Mammary epithelial cell (primary cell): ENCODE measurements at regions of chr2 and their contacts with region 1.

Region 1: DNA sequence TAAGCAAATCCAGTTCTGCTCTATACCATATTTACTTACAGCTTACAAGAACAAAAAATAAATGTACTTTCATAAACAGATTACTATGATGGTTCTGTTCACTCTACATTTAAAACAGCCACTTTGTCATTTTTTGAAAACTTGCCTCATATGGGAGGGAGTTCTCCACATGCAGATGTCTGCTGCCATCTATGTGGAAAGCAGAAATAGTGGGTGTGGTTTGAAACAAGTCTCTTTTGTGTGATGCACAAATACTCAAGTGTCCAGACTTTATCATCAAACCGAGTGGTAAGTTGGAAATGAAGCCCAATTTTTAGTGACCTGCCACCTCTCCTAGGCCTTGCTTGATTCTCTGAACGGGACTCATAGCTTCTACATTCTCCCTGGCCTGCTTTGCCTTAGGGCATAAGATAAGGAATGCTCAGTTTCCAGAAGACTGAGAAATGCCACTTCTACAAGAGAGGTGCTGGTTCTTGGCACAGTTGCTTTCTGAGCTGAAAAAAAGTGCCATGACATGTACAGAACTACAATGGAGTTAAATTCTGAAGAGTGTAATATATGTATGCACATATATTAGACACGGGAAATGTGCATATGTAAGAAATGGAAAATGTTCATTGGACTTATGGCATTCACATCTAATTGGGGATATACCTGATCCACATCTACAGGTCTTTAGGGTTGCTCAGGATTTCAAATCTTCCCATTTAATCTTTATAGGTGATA is 221.0 kb downstream of the SLC8A1 start:
- DNase-seq: peak; percentile 12
- H3K4me3 ChIP-seq: no peak overlapping the region
- H3K27ac ChIP-seq: no peak overlapping the region
- H3K4me1 ChIP-seq: no peaks in the 10 kb centered on the region
- H3K27me3 ChIP-seq: no peaks in the 10 kb centered on the region
- CTCF ChIP-seq: peak in 1 of 2 donors; percentile 34

Region 2: GRCh38 chr2:39989888-39990287 is 241.0 kb before region 1 on chr2:
- CTCF ChIA-PET with region 1: no interaction called
- dilution Hi-C with region 1: no loop called
- in situ Hi-C with region 1: no loop called
- intact Hi-C with region 1: loop called (anchors 2 kb)
- DNase-seq: no peak
- H3K4me3 ChIP-seq: no peak overlapping the region
- H3K27ac ChIP-seq: no peak overlapping the region
- H3K4me1 ChIP-seq: peaks cover 8% of the 10 kb centered on the region
- H3K27me3 ChIP-seq: no peaks in the 10 kb centered on the region
- CTCF ChIP-seq: no peak

Region 3: DNA sequence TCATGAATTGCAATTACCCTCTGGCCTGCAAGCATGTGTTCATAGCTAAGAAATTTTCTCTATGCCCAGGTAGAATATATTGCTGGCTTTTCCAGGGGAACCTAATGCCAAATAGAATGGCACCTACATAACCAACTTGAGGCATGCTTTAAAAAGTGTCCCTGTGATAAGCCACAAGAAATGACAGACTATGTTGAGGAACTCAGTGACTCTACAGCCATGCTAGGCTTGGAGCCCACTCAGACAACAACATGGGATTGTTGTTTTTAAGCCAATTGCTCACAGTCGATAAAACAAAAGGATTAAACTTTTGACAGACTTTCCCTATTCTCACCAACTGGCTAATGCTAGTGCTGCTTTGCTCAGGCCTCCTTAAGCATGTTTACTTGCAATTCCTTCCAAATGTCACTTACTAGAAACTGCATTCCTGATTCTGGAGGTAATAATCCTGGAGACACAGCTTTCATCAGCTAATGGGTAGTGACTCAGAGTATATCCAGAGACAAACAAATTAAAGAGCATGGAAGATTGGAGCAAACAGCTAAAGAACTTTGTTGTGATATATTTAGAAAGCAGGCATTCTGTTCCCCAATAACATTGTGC is 28.0 kb before region 1 on chr2:
- CTCF ChIA-PET with region 1: no interaction called
- dilution Hi-C with region 1: no loop called
- in situ Hi-C with region 1: no loop called
- intact Hi-C with region 1: no loop called
- DNase-seq: no peak
- H3K4me3 ChIP-seq: no peak overlapping the region
- H3K27ac ChIP-seq: no peak overlapping the region
- H3K4me1 ChIP-seq: no peaks in the 10 kb centered on the region
- H3K27me3 ChIP-seq: no peaks in the 10 kb centered on the region
- CTCF ChIP-seq: no peak